ENCODE measurements at regions of chr11 and their contacts with region 1.

Region 1: GRCh38 chr11:10455637-10456487 is 798 bp downstream of the AMPD3 start:
- DNase-seq: peak in 41 of 42 donors; percentile 47 to 92 (median 71)

Region 2: DNA sequence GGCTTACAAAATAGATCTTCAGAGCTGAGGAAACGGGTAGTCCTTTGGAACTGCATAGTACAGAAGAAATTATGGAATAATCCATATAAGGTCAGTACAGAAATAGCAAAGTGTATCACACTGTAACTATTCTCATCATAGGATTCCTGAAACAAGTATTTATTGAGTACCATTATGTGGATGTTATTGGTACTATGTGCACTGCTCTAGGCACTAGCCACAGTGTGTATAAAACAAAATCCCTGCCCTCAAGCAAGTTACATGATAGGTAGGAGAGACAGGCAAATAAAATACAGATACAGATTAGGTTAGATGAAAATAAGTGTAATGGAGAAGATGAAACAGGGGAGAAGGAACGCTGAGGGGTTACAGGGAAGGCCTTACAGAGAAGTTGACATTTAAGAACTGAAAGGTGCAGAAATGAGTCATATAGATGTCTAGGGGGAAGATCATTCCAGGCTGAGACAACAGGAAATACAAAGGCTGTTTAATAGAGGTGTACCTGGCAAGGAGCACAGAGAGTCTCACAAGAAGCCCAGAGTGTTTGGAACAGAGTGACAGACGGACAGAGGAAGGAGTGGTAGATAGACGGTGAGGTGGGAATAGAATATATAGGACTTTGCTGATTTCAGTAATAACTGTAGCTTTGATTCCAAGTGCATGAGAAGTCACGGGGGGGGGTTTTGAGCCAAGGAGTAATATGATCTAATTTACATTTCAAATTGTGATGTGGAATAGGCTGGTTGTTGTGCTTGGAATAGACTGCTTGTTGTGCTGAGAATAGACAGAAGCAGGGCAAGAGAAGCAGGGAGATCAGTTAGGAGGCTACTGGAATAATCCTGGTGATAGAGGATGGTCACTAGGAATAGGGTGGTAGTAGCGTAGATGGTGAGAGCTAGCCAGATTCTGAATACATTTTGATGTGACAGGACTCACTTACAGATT is 71.4 kb after region 1 on chr11:
- intact Hi-C with region 1: loop called (anchors 10 kb)
- DNase-seq: peak in 18 of 42 donors; percentile 28 to 84 (median 50)

Region 3: GRCh38 chr11:11022125-11022730 is 566.4 kb after region 1 on chr11:
- intact Hi-C with region 1: no loop called
- DNase-seq: peak in 7 of 42 donors; percentile 8 to 56 (median 28)